CD14-positive monocyte (primary cell): ENCODE measurements at regions of chr15 and their contacts with region 1.

Region 1: DNA sequence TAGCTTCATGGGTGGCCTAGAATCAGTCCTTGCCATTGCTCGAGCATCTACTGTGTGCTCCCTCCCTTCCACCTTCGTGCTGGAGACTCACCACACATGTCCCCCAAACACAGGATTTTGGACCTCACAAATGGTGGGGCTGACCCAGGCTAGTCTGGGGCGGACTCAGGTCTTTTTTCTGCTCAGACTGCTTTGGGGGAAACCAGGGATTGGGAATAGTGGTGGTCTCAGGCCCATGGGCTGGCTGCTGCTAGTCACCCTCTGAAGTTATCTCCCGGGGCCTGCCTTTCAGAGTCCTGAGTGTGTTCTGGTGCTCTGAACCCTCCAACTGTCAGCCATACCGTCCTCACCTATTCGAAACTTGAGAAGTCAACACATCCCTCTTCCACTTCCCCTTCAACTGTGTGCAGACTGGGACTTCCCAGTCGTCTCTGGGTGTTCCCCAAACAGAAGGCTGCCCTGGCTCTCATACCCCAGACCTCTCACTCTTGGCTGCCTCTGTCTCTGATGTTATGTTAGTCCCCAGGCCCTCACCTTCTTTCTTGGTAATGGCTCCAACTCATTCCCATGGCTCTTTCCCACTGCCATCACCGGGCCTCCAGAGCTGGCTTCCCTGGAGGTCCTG is 46.0 kb downstream of the PPCDC start:
- DNase-seq: peak; percentile 88 to 94 (median 94)
- H3K4me3 ChIP-seq: no peak overlapping the region
- H3K4me3 Mint-ChIP-seq: peak overlapping the region; percentile 38 to 63
- H3K27ac ChIP-seq: peak overlapping the region; percentile 92 to 94
- H3K27ac Mint-ChIP-seq: peak overlapping the region; percentile 95 to 100 (median 98)
- H3K4me1 ChIP-seq: peaks cover 89 to 97% of the 10 kb centered on the region in 2 donors
- H3K4me1 Mint-ChIP-seq: peaks cover 89% of the 10 kb centered on the region
- H3K27me3 ChIP-seq: no peaks in the 10 kb centered on the region
- H3K27me3 Mint-ChIP-seq: peaks cover 1 to 7% (median 2%) of the 10 kb centered on the region in 3 donors
- CTCF ChIP-seq: no peak

Region 2: GRCh38 chr15:75029378-75030022 is 39.9 kb before region 1 on chr15:
- intact Hi-C with region 1: loop called in 1 of 2 experiments (anchors 5 kb)
- DNase-seq: peak; percentile 90 to 94 (median 94)
- H3K4me3 ChIP-seq: peak overlapping the region in 2 of 3 experiments; percentile 12 to 64
- H3K4me3 Mint-ChIP-seq: peak overlapping the region; percentile 65 to 84
- H3K27ac ChIP-seq: peak overlapping the region; percentile 82 to 84
- H3K27ac Mint-ChIP-seq: peak overlapping the region; percentile 83 to 92 (median 89)
- H3K4me1 ChIP-seq: peaks cover 70 to 71% of the 10 kb centered on the region in 2 donors
- H3K4me1 Mint-ChIP-seq: peaks cover 66% of the 10 kb centered on the region
- H3K27me3 ChIP-seq: no peaks in the 10 kb centered on the region
- H3K27me3 Mint-ChIP-seq: peaks cover 0 to 1% (median 0%) of the 10 kb centered on the region in 3 donors
- CTCF ChIP-seq: peak; percentile 81

Region 3: GRCh38 chr15:75104804-75105535 is 35.6 kb after region 1 on chr15:
- intact Hi-C with region 1: loop called (anchors 2 to 5 kb)
- DNase-seq: peak; percentile 88 to 95 (median 95)
- H3K4me3 ChIP-seq: peak overlapping the region in 1 of 3 experiments; percentile 26
- H3K4me3 Mint-ChIP-seq: peak overlapping the region; percentile 32 to 44
- H3K27ac ChIP-seq: peak overlapping the region; percentile 77 to 93
- H3K27ac Mint-ChIP-seq: peak overlapping the region; percentile 87 to 97 (median 94)
- H3K4me1 ChIP-seq: peaks cover 53 to 57% of the 10 kb centered on the region in 2 donors
- H3K4me1 Mint-ChIP-seq: peaks cover 61% of the 10 kb centered on the region
- H3K27me3 ChIP-seq: no peaks in the 10 kb centered on the region
- H3K27me3 Mint-ChIP-seq: peaks cover 0 to 5% (median 0%) of the 10 kb centered on the region in 3 donors
- CTCF ChIP-seq: no peak

Region 4: GRCh38 chr15:75215107-75216004 is 145.9 kb after region 1 on chr15:
- intact Hi-C with region 1: no loop called
- DNase-seq: no peak
- H3K4me3 ChIP-seq: no peak overlapping the region
- H3K4me3 Mint-ChIP-seq: no peak overlapping the region
- H3K27ac ChIP-seq: peak overlapping the region; percentile 15 to 45
- H3K27ac Mint-ChIP-seq: peak overlapping the region in 5 of 7 donors; percentile 28 to 68 (median 60)
- H3K4me1 ChIP-seq: peaks cover 6 to 11% of the 10 kb centered on the region in 2 donors
- H3K4me1 Mint-ChIP-seq: peaks cover 36% of the 10 kb centered on the region
- H3K27me3 ChIP-seq: no peaks in the 10 kb centered on the region
- H3K27me3 Mint-ChIP-seq: peaks cover 0 to 3% (median 0%) of the 10 kb centered on the region in 3 donors
- CTCF ChIP-seq: no peak